MCF 10A (cell line): ENCODE measurements at regions of chr3 and their contacts with region 1.

Region 1: GRCh38 chr3:42547401-42547945 is 34.3 kb downstream of the SEC22C start:
- DNase-seq: peak; percentile 56
- H3K4me3 Mint-ChIP-seq: no peak overlapping the region
- H3K27ac Mint-ChIP-seq: no peak overlapping the region
- H3K4me1 Mint-ChIP-seq: no peaks in the 10 kb centered on the region
- H3K27me3 Mint-ChIP-seq: no peaks in the 10 kb centered on the region
- CTCF ChIP-seq: peak; percentile 93

Region 2: GRCh38 chr3:42110631-42111030 is 436.8 kb before region 1 on chr3:
- CTCF ChIA-PET with region 1: no interaction called
- POLR2A ChIA-PET with region 1: no interaction called
- intact Hi-C with region 1: no loop called
- DNase-seq: no peak
- H3K4me3 Mint-ChIP-seq: no peak overlapping the region
- H3K27ac Mint-ChIP-seq: no peak overlapping the region
- H3K4me1 Mint-ChIP-seq: no peaks in the 10 kb centered on the region
- H3K27me3 Mint-ChIP-seq: no peaks in the 10 kb centered on the region
- CTCF ChIP-seq: no peak

Region 3: GRCh38 chr3:42247576-42248027 is 299.9 kb before region 1 on chr3:
- CTCF ChIA-PET with region 1: interaction called, 19 read pairs
- POLR2A ChIA-PET with region 1: no interaction called
- intact Hi-C with region 1: no loop called
- DNase-seq: peak; percentile 74
- H3K4me3 Mint-ChIP-seq: no peak overlapping the region
- H3K27ac Mint-ChIP-seq: no peak overlapping the region
- H3K4me1 Mint-ChIP-seq: peaks cover 10% of the 10 kb centered on the region
- H3K27me3 Mint-ChIP-seq: peaks cover 9% of the 10 kb centered on the region
- CTCF ChIP-seq: peak; percentile 87

Region 4: DNA sequence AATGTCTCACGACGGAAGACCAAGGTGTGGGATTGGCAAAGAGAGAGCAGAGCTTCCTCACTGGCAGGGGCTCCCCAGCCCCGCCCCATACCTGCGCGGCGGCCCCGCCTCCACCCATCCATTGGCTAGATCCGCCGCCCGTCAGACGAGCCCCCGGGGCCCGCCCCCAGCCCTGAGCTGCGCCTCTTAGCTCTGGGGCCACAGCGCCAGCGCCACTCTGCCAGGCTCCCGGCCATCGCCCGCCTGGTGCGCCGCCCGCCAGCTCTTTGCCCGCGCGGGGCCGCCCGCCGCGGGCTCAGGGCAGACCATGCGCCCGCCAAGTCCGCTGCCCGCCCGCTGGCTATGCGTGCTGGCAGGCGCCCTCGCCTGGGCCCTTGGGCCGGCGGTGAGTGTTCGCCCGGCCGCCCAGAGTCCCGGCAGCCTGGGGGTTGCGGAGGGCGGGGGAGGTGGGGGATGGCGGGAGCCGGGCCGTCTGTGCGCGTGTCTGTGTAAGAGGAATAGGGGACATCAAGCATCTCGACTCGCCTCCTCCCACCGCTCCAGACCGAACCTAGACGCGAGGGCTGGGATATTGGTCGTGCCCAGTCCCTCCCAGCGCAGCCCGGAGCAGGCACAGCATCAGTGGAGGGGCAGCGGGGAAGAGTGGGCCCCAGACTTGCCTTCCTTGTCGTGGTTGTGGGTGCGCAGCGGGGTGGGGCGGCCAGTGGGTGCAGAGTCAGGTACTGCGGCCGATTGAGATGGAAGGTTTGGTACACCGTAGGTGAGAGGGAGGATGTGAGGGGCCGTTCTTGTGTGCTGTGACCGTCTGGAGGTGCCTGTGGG is 44.8 kb before region 1 on chr3 and contains the start of gene VIPR1:
- CTCF ChIA-PET with region 1: interaction called, 5 read pairs
- POLR2A ChIA-PET with region 1: interaction called, 3 read pairs
- intact Hi-C with region 1: loop called (anchors 2 kb)
- DNase-seq: peak; percentile 78
- H3K4me3 Mint-ChIP-seq: peak within 1 kb of the TSS; percentile 72
- H3K27ac Mint-ChIP-seq: peak within 1 kb of the TSS; percentile 5
- H3K4me1 Mint-ChIP-seq: peaks cover 10% of the 10 kb centered on the region
- H3K27me3 Mint-ChIP-seq: peaks cover 23% of the 10 kb centered on the region
- CTCF ChIP-seq: no peak
- total RNA-seq, gene VIPR1: 0.28 and 0.54 TPM in 2 replicates

Region 5: DNA sequence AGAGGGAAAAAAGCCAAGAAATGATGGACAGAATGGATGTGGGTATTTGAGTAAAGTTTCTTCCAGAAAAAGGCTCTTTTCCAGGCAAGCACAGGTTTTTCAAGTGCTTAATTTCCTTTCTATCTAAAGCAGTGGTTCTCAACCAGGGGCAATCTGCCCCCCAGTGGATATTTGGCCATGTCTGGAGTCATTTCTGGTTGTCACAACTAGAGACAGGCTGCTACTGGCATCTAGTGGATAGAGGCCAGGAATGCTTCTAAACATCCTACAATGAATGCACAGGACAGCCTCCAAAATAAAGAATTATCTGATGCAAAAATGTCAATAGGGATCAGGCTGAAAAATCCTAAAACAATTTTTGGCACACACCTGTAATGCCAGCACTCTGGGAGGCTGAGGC is 10.4 kb after region 1 on chr3:
- CTCF ChIA-PET with region 1: interaction called, 10 read pairs
- POLR2A ChIA-PET with region 1: no interaction called
- intact Hi-C with region 1: no loop called
- DNase-seq: no peak
- H3K4me3 Mint-ChIP-seq: no peak overlapping the region
- H3K27ac Mint-ChIP-seq: no peak overlapping the region
- H3K4me1 Mint-ChIP-seq: no peaks in the 10 kb centered on the region
- H3K27me3 Mint-ChIP-seq: no peaks in the 10 kb centered on the region
- CTCF ChIP-seq: no peak

Region 6: DNA sequence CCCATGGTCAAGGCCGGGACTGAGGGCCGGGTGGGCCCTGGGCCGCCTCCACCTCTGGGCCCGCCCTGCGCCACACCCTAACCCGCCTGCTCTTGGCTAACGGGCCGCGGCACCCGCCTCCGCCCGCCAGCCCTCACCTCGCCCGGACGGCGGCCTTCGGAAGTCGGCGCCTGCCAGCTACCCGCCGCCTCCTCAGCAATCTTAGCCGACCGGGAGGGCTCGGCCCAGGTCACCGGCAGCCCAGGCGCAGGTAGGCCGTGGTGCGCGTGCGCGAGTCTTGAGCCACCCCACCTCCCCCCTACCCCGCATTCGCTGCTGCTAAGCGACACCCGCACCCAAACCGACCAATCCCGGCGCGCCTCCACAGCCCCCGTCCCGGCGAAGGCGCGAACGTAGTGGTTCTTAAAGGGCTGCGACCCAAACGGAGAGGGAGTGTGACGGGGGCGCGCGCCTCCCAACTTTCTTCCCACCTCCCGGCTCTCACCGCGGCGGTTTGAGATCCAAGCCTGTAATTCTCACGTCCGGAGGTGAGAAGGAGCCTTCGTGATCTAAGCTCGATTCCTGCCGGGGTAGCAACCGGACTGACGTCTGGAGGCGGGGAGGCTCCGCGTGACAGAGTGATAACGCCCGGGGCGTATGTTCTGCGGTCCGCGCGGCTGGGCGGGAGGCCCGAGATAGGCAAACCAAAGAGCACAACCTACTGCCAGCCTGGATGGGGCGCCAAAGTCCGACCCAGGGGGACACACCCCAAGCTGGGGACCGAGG is 34.4 kb after region 1 on chr3 and contains the start of gene SEC22C:
- CTCF ChIA-PET with region 1: interaction called, 14 read pairs
- POLR2A ChIA-PET with region 1: no interaction called
- intact Hi-C with region 1: no loop called
- DNase-seq: peak; percentile 96
- H3K4me3 Mint-ChIP-seq: peak within 1 kb of the TSS; percentile 78
- H3K27ac Mint-ChIP-seq: peak within 1 kb of the TSS; percentile 66
- H3K4me1 Mint-ChIP-seq: peaks cover 29% of the 10 kb centered on the region
- H3K27me3 Mint-ChIP-seq: no peaks in the 10 kb centered on the region
- CTCF ChIP-seq: peak; percentile 20
- total RNA-seq, gene SEC22C: 52.1 and 55.7 TPM in 2 replicates

Region 7: GRCh38 chr3:42790714-42791229 is 243.3 kb after region 1 on chr3:
- CTCF ChIA-PET with region 1: no interaction called
- POLR2A ChIA-PET with region 1: no interaction called
- intact Hi-C with region 1: no loop called
- DNase-seq: no peak
- H3K4me3 Mint-ChIP-seq: no peak overlapping the region
- H3K27ac Mint-ChIP-seq: peak overlapping the region; percentile 40
- H3K4me1 Mint-ChIP-seq: peaks cover 6% of the 10 kb centered on the region
- H3K27me3 Mint-ChIP-seq: no peaks in the 10 kb centered on the region
- CTCF ChIP-seq: no peak